ENCODE measurements at regions of chr12 and their contacts with region 1.

Region 1: GRCh38 chr12:47307680-47308399 is 228.1 kb upstream of the AMIGO2 start:
- DNase-seq: peak; percentile 35 to 81
- ATAC-seq: peak; percentile 92 to 95 (median 93)
- H3K4me3 ChIP-seq: peak overlapping the region; percentile 42
- H3K4me3 Mint-ChIP-seq: peak overlapping the region; percentile 92
- H3K27ac ChIP-seq: peak overlapping the region; percentile 51
- H3K27ac Mint-ChIP-seq: peak overlapping the region; percentile 86 to 93
- H3K4me1 ChIP-seq: peaks cover 12% of the 10 kb centered on the region
- H3K4me1 Mint-ChIP-seq: peaks cover 22% of the 10 kb centered on the region in 2 donors
- H3K27me3 ChIP-seq: no peaks in the 10 kb centered on the region
- H3K27me3 Mint-ChIP-seq: no peaks in the 10 kb centered on the region
- CTCF ChIP-seq: peak; percentile 68

Region 2: DNA sequence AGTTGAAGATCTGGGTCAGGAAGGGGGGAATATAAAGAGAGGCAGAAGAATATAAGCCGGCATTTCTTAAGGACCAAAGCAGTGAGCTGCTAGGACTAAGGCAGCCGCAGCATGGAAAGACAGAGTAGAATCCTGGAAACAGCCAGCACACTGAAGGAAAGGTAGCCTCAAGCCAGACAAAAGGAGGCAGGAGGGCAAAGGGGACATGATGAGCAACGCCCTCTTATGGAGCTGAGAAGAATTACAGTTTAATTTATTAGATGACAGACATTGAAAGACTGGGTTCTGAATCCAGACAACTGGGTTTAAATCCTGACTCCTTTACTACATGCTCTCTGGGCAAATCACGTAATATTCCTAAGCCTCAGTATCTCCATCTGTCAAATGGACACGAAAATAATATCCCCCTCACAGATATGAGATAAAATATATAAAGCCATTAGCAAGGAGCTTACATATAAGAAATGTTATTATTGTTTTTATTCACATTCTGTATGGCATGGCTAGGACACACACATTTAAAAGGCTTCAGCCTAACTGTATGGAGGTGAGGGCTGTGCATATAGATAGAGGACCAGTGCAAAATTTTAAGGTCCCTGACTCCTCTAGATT is 236.5 kb before region 1 on chr12:
- intact Hi-C with region 1: loop called (anchors 1 kb)
- DNase-seq: peak in 1 of 2 donors; percentile 61
- ATAC-seq: peak in 2 of 3 donors; percentile 36 to 57
- H3K4me3 ChIP-seq: no peak overlapping the region
- H3K4me3 Mint-ChIP-seq: no peak overlapping the region
- H3K27ac ChIP-seq: no peak overlapping the region
- H3K27ac Mint-ChIP-seq: no peak overlapping the region
- H3K4me1 ChIP-seq: no peaks in the 10 kb centered on the region
- H3K4me1 Mint-ChIP-seq: no peaks in the 10 kb centered on the region
- H3K27me3 ChIP-seq: no peaks in the 10 kb centered on the region
- H3K27me3 Mint-ChIP-seq: no peaks in the 10 kb centered on the region
- CTCF ChIP-seq: peak; percentile 72

Region 3: DNA sequence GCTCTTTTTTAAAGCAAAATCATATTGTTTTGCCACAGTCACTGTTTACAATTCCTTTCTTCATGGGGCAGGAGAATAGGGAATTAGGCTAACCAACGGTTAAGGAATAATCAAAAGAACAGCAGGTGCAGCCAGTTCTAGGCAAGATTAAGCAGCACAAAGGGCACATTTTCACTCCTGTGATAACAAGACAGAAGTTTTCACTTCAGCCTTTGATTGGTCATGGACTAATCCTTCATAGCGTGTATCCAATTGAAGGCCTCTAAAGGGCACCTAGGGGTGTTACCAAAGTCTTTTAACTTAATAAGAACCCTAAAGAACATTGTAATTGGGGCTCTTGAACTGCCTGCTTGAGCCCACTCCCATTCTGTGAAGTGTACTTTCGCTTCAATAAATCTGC is 21.2 kb before region 1 on chr12:
- intact Hi-C with region 1: no loop called
- DNase-seq: no peak
- ATAC-seq: no peak
- H3K4me3 ChIP-seq: no peak overlapping the region
- H3K4me3 Mint-ChIP-seq: no peak overlapping the region
- H3K27ac ChIP-seq: no peak overlapping the region
- H3K27ac Mint-ChIP-seq: no peak overlapping the region
- H3K4me1 ChIP-seq: no peaks in the 10 kb centered on the region
- H3K4me1 Mint-ChIP-seq: no peaks in the 10 kb centered on the region
- H3K27me3 ChIP-seq: no peaks in the 10 kb centered on the region
- H3K27me3 Mint-ChIP-seq: no peaks in the 10 kb centered on the region
- CTCF ChIP-seq: no peak

Region 4: GRCh38 chr12:47361389-47362021 is 53.7 kb after region 1 on chr12:
- intact Hi-C with region 1: no loop called
- DNase-seq: peak in 1 of 2 donors; percentile 70
- ATAC-seq: peak; percentile 72 to 81 (median 78)
- H3K4me3 ChIP-seq: peak overlapping the region; percentile 29
- H3K4me3 Mint-ChIP-seq: peak overlapping the region; percentile 75
- H3K27ac ChIP-seq: peak overlapping the region; percentile 97
- H3K27ac Mint-ChIP-seq: peak overlapping the region; percentile 91 to 93
- H3K4me1 ChIP-seq: peaks cover 47% of the 10 kb centered on the region
- H3K4me1 Mint-ChIP-seq: peaks cover 39 to 45% of the 10 kb centered on the region in 2 donors
- H3K27me3 ChIP-seq: no peaks in the 10 kb centered on the region
- H3K27me3 Mint-ChIP-seq: no peaks in the 10 kb centered on the region
- CTCF ChIP-seq: no peak